ENCODE measurements at regions of chr15 and their contacts with region 1.

Region 1: GRCh38 chr15:35958021-35958420 is 412.1 kb upstream of the DPH6 start:
- DNase-seq: no peak
- H3K4me3 ChIP-seq: no peak overlapping the region
- H3K27ac ChIP-seq: no peak overlapping the region
- H3K4me1 ChIP-seq: no peaks in the 10 kb centered on the region
- H3K27me3 ChIP-seq: peaks cover 5 to 6% of the 10 kb centered on the region in 2 experiments
- CTCF ChIP-seq: no peak
- POLR2A ChIP-seq: no peak

Region 2: DNA sequence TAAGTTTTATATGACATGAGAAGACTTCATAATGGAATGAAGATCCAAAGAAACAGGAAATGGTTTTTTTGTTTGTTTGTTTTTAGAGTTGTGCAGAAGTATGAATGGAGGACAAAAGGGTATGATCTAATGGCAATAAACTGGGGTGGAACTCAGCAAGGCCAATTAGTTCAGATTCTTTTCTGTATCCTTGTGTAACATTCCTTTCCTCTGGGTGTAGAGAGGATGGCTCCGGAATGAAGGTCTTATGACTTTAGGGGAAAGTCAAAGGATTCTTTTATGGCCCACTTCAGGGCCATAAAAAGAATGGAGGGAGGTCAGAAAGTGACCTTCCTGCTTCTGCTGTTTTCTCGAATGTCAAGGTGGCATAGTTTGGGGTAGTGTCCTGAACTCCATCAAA is 564.6 kb before region 1 on chr15:
- CTCF ChIA-PET with region 1: no interaction called
- POLR2A ChIA-PET with region 1: no interaction called
- dilution Hi-C with region 1: no loop called
- intact Hi-C with region 1: no loop called
- DNase-seq: no peak
- H3K4me3 ChIP-seq: no peak overlapping the region
- H3K27ac ChIP-seq: no peak overlapping the region
- H3K4me1 ChIP-seq: peaks cover 7% of the 10 kb centered on the region
- H3K27me3 ChIP-seq: no peaks in the 10 kb centered on the region
- CTCF ChIP-seq: no peak
- POLR2A ChIP-seq: no peak

Region 3: GRCh38 chr15:35944945-35945585 is 13.0 kb before region 1 on chr15:
- CTCF ChIA-PET with region 1: interaction called, 4 read pairs
- POLR2A ChIA-PET with region 1: no interaction called
- dilution Hi-C with region 1: no loop called
- intact Hi-C with region 1: loop called (anchors 2 kb)
- DNase-seq: no peak
- H3K4me3 ChIP-seq: no peak overlapping the region
- H3K27ac ChIP-seq: no peak overlapping the region
- H3K4me1 ChIP-seq: no peaks in the 10 kb centered on the region
- H3K27me3 ChIP-seq: no peaks in the 10 kb centered on the region
- CTCF ChIP-seq: no peak
- POLR2A ChIP-seq: no peak

Measured in endothelial cell of umbilical vein (primary cell).